A549 (cell line): ENCODE measurements at regions of chr20 and their contacts with region 1.

Region 1: GRCh38 chr20:23050847-23051631 is 1.6 kb upstream of the THBD start:
- DNase-seq: peak in 1 of 2 experiments; percentile 77
- ATAC-seq: peak; percentile 3 to 34
- H3K4me3 ChIP-seq: peak overlapping the region; percentile 72
- H3K27ac ChIP-seq: peak overlapping the region; percentile 93 to 95
- H3K4me1 ChIP-seq: peaks cover 29% of the 10 kb centered on the region
- CTCF ChIP-seq: peak; percentile 76
- EP300 ChIP-seq: no peak
- POLR2A ChIP-seq: no peak
- RAD21 ChIP-seq: peak; percentile 73 to 74

Region 2: DNA sequence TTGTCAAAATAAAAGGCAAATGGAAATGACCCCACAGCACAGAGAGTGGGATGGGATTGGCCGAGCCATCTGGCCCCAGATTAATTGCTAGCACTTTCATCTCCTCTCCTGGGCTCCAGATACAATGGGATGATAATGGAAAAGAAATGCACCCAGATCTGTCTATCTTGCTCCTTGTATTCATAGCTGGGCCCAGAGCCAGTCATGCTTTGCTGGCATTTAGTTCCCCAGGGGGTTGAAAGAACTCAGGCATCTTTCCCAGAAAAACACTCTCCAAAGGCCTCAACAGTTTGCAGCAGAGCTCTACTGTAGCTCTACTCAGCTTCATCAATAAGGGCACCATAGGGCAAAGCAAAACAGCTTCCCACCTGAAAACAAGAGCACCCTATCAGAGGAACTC is 350.7 kb before region 1 on chr20:
- CTCF ChIA-PET with region 1: interaction called, 190 read pairs
- POLR2A ChIA-PET with region 1: interaction called, 3 read pairs
- DNase-seq: no peak
- ATAC-seq: no peak; a peak in 1 of 6 replicates
- H3K4me3 ChIP-seq: no peak overlapping the region
- H3K27ac ChIP-seq: peak overlapping the region; percentile 17 to 54
- H3K4me1 ChIP-seq: peaks cover 14% of the 10 kb centered on the region; the same call in 2 of the 3 replicates
- CTCF ChIP-seq: no peak
- EP300 ChIP-seq: no peak
- POLR2A ChIP-seq: no peak
- RAD21 ChIP-seq: no peak

Region 3: DNA sequence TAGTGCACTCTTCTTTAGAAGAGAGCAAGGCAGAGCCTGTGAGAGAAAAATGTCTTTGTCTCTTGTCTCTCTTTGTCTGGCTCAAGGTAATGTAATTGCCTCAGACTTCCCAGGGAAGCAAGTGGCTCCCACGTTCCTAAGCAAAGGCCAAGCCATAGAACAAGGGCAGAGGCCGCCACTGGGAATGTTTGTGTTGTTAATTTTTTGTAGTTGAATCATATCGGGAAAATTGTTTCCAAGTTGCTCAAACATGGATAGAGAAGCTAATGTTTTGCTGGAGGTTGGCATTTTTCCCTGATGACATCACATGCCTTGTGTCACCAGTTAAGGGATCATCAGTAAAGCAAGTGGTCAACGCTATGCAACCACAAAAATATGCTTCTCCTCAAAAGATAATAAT is 255.2 kb before region 1 on chr20:
- CTCF ChIA-PET with region 1: interaction called, 4 read pairs
- POLR2A ChIA-PET with region 1: interaction called, 18 read pairs
- DNase-seq: peak; percentile 79 to 97
- ATAC-seq: peak; percentile 92
- H3K4me3 ChIP-seq: no peak overlapping the region
- H3K27ac ChIP-seq: peak overlapping the region; percentile 92 to 97
- H3K4me1 ChIP-seq: peaks cover 66% of the 10 kb centered on the region
- CTCF ChIP-seq: no peak
- EP300 ChIP-seq: peak; percentile 96 to 97; a peak in 4 of 5 replicates
- POLR2A ChIP-seq: no peak
- RAD21 ChIP-seq: peak; percentile 38 to 78

Region 4: GRCh38 chr20:23019403-23019802 is 31.6 kb before region 1 on chr20:
- CTCF ChIA-PET with region 1: interaction called, 12 read pairs
- POLR2A ChIA-PET with region 1: no interaction called
- DNase-seq: peak in 1 of 2 experiments; percentile 23
- ATAC-seq: no peak
- H3K4me3 ChIP-seq: no peak overlapping the region
- H3K27ac ChIP-seq: peak overlapping the region; percentile 6 to 42; a peak in 4 of 6 replicates
- H3K4me1 ChIP-seq: peaks cover 15% of the 10 kb centered on the region
- CTCF ChIP-seq: no peak
- EP300 ChIP-seq: no peak
- POLR2A ChIP-seq: no peak
- RAD21 ChIP-seq: peak; percentile 41 to 54; a peak in 4 of 5 replicates

Region 5: GRCh38 chr20:23200918-23201317 is 149.9 kb after region 1 on chr20:
- CTCF ChIA-PET with region 1: interaction called, 28 read pairs
- POLR2A ChIA-PET with region 1: interaction called, 4 read pairs
- DNase-seq: peak; percentile 43 to 66
- ATAC-seq: peak; percentile 84 to 93; a peak in 5 of 6 replicates
- H3K4me3 ChIP-seq: no peak overlapping the region
- H3K27ac ChIP-seq: 0 out of 6 replicates have a peak overlapping the region, but pooled peaks of 1 of the 2 experiments have one; percentile 8
- H3K4me1 ChIP-seq: no peaks in the 10 kb centered on the region
- CTCF ChIP-seq: peak; percentile 54
- EP300 ChIP-seq: no peak
- POLR2A ChIP-seq: no peak
- RAD21 ChIP-seq: peak; percentile 74 to 76

Region 6: DNA sequence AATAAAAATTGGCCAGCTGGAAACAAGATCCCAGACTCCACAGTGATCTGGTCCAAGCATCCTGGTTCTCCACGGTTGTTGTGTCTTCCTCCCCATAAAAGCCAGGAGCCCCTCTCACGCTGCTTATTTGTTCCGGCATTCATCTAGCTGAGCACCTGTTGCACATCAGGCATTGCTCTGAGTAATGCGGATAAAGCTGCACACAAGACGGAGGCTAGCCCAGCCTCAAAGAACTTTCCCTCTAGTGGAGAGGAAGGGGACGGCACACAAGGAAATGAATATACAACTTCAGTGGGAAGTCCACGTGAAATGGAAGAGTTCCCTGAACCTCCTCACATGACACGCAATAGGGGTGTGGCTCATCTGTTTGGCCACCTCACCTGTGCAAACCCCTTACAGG is 269.3 kb after region 1 on chr20:
- CTCF ChIA-PET with region 1: interaction called, 11 read pairs
- POLR2A ChIA-PET with region 1: no interaction called
- DNase-seq: peak; percentile 55 to 64
- ATAC-seq: peak; percentile 81 to 93; a peak in 5 of 6 replicates
- H3K4me3 ChIP-seq: no peak overlapping the region
- H3K27ac ChIP-seq: no peak overlapping the region
- H3K4me1 ChIP-seq: no peaks in the 10 kb centered on the region; the same call in 2 of the 3 replicates
- CTCF ChIP-seq: peak; percentile 28; the same call in 2 of the 3 replicates
- EP300 ChIP-seq: no peak
- POLR2A ChIP-seq: no peak
- RAD21 ChIP-seq: peak; percentile 30 to 41; a peak in 3 of 5 replicates